Right cardiac atrium (tissue), 5 donors: ENCODE measurements at regions of chrX and their contacts with region 1.

Region 1: DNA sequence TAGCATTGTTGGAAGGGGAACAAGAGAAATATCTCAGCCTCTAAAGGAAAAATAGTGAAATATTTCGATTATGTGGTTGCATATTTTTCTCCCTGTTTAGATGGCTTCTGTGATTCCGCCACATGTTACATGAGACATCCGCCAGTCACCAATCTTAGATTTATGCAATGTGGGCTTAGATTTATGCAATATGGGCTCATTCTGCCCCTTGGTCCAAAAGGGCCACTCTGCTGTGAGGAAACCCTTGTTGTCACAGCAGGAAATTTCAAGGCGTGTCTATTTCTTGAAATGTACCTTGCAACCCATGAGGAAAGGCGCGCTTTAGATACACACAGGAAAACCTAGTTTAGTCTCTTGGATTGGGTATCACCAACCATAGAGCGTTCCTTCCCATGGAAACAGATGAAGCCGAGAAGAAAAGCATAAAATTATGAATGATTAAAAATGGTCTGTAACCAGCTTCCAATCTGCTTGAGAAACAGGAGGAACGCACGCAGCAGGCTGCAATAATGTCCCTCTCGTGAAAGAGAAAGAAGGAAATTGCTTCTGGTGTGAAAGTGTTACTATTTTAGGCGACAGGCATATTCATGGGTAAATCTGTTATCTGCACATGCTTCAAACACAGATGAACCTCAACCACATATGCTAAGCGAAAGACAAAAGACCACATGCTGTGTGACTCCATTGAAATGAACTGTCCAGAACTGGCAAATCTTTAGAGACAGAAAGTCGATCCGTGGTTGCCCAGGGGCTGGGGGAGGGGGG is 3.7 kb downstream of the RS1 start:
- DNase-seq: no peak
- ATAC-seq: no peak
- H3K4me3 ChIP-seq: no peak overlapping the region
- H3K27ac ChIP-seq: no peak overlapping the region
- H3K4me1 ChIP-seq: no peaks in the 10 kb centered on the region
- H3K27me3 ChIP-seq: no peaks in the 10 kb centered on the region

Region 2: DNA sequence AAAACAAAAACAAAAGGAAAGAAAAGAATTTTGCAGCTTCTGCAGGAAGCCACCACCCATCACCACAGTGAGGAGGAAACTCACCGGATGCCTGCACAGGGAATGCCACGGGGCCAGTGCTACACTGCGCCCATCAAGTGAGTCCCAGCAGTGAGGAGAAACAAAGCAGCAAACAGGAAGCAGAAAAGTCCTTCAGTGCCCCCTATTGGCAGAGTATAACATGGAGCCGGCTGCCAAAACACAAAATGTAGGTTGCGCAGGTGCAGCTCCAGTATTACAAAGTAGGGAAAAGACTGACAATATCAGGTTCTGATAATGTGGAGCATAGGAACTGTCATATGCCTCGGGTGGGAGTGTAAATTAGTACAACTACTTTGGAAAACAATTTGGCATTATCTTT is 290.5 kb before region 1 on chrX:
- intact Hi-C with region 1: no loop called
- DNase-seq: no peak
- ATAC-seq: no peak
- H3K4me3 ChIP-seq: no peak overlapping the region
- H3K27ac ChIP-seq: no peak overlapping the region
- H3K4me1 ChIP-seq: no peaks in the 10 kb centered on the region
- H3K27me3 ChIP-seq: no peaks in the 10 kb centered on the region

Region 3: GRCh38 chrX:18425199-18426003 is 242.9 kb before region 1 on chrX and contains the start of gene CDKL5:
- intact Hi-C with region 1: loop called in 1 of 4 experiments (anchors 10 kb)
- DNase-seq: peak; percentile 97 to 98 (median 98)
- ATAC-seq: peak; percentile 98
- H3K4me3 ChIP-seq: peak within 1 kb of the TSS; percentile 80
- H3K27ac ChIP-seq: peak within 1 kb of the TSS; percentile 68
- H3K4me1 ChIP-seq: no peaks in the 10 kb centered on the region
- H3K27me3 ChIP-seq: no peaks in the 10 kb centered on the region
- total RNA-seq, gene CDKL5: 11.2 to 15.9 (median 14.8) TPM

Region 4: GRCh38 chrX:18558799-18559198 is 109.5 kb before region 1 on chrX:
- intact Hi-C with region 1: no loop called
- DNase-seq: no peak
- ATAC-seq: no peak
- H3K4me3 ChIP-seq: no peak overlapping the region
- H3K27ac ChIP-seq: no peak overlapping the region
- H3K4me1 ChIP-seq: no peaks in the 10 kb centered on the region
- H3K27me3 ChIP-seq: no peaks in the 10 kb centered on the region

Region 5: DNA sequence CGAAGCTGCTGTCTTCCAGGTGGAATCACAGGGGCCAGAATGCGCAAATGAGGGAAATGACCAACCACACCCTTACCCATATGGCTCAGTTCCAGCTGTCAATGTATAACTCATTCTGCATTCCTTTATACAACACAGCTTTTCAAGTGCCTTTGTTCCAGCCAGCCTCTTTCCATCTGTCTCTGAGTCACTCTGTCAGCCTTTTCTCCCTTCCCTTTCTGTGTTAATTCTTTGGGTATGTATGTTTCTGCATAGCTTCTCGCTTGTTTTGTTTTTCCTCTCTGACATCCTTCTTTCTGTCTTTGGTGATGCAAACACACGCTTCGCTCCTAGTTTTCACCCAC is 50.9 kb before region 1 on chrX:
- intact Hi-C with region 1: no loop called
- DNase-seq: no peak
- ATAC-seq: no peak
- H3K4me3 ChIP-seq: no peak overlapping the region
- H3K27ac ChIP-seq: no peak overlapping the region
- H3K4me1 ChIP-seq: no peaks in the 10 kb centered on the region
- H3K27me3 ChIP-seq: no peaks in the 10 kb centered on the region

Region 6: GRCh38 chrX:18640686-18641085 is 27.6 kb before region 1 on chrX:
- intact Hi-C with region 1: no loop called
- DNase-seq: no peak
- ATAC-seq: no peak
- H3K4me3 ChIP-seq: no peak overlapping the region
- H3K27ac ChIP-seq: no peak overlapping the region
- H3K4me1 ChIP-seq: no peaks in the 10 kb centered on the region
- H3K27me3 ChIP-seq: no peaks in the 10 kb centered on the region